ENCODE measurements at regions of chr1 and their contacts with region 1.

Region 1: DNA sequence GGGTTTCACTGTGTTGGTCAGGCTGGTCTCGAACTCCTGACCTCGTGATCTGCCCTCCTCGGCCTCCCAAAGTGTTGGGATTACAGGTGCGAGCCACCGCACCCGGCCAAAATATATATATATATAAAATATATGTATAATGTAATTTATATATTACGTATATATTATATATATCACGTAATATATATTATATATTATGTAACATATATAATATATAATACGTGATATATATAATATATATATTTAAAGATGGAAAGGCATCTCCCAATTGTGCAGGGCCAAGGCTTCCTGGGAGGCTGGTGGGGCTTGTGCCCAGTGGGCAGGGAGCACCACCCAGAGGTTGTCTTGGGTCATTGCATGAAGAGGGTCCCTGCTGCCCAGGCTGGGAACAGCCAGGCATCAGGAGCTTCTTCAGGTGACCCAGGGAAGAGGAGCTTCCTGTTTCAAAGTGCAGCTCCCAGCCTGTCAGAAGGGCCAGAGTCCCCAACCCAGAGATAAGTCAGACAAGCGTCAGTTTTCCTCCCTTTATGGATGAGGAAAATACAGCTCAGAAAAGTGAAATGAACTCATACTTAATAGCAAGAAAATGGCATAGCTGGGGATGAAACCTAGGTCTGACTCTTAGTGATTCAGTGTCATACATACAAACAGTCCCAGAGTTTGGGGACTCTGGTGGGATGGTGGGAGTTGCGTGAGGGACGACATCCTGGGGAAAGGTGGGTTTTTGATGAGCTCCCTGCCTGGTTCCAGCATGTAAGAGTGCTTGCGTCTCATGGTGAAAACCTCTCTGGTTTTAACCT is 12.0 kb downstream of the UBE2Q1 start:
- DNase-seq: peak; percentile 13
- ATAC-seq: peak; percentile 87
- H3K4me3 ChIP-seq: no peak overlapping the region
- H3K27ac ChIP-seq: no peak overlapping the region
- H3K4me1 ChIP-seq: peaks cover 15% of the 10 kb centered on the region
- H3K27me3 ChIP-seq: no peaks in the 10 kb centered on the region; a peak in 1 of 4 replicates
- CTCF ChIP-seq: peak; percentile 72 to 86 (median 84)
- EP300 ChIP-seq: no peak
- POLR2A ChIP-seq: no peak
- RAD21 ChIP-seq: peak; percentile 98

Region 2: DNA sequence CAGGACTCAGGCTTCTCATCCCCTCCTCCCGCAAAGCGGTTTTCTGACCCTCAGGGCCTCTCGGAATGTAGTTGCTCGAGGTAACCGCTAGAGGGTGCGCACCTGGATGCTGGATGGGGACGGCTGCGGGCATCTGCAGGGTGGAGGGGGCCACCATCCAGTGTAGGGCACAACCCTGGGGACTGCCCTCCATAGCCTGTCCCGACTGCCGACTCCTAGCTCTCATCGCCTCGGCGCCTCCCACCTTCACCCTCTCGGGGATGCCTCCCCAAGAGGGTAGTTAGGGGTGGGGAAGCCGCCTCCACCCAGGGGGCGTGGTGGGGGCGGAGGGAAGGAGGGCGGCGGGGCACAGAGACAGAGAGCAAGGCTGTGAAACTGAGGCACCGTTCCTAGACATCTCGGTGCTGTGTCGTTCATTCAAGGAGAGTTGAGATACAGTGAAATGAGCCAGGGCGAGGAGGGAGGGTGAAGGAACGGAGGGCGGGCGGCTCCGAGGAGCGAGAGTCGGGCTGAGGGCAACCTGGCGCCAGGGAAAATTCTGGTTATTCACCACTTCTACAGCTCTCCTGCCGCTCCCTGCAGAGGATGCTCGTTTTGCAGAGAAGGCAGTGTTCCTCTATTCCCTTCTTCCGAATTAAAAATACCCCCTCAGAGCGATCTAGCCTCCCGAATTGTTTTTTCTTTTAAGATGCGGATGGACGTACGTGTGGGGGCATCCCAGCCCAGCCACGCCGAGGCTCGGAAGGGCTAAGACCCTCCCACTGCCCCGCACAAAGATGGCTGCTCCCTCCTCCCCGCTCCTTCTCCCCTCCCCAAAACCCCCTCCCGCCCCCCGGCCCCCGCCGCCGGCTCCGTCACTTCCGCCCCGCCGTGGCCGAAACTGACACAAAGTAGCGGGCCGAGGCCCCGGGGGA is 221.5 kb before region 1 on chr1 and contains the start of gene ATP8B2:
- CTCF ChIA-PET with region 1: interaction called, 14 read pairs
- POLR2A ChIA-PET with region 1: no interaction called
- RAD21 ChIA-PET with region 1: interaction called, 3 read pairs
- SMC1A ChIA-PET with region 1: interaction called, 5 read pairs
- in situ Hi-C with region 1: no loop called
- intact Hi-C with region 1: no loop called
- DNase-seq: no peak
- ATAC-seq: peak; percentile 74
- H3K4me3 ChIP-seq: peak within 1 kb of the TSS; percentile 91
- H3K27ac ChIP-seq: peak within 1 kb of the TSS; percentile 42
- H3K4me1 ChIP-seq: peaks cover 23% of the 10 kb centered on the region
- H3K27me3 ChIP-seq: no peaks in the 10 kb centered on the region
- CTCF ChIP-seq: peak; percentile 92 to 94 (median 92)
- EP300 ChIP-seq: no peak
- POLR2A ChIP-seq: no peak; the same call in 1 of the 2 replicates
- RAD21 ChIP-seq: peak; percentile 54
- polyA plus RNA-seq, gene ATP8B2: 0.44 to 0.82 TPM

Region 3: DNA sequence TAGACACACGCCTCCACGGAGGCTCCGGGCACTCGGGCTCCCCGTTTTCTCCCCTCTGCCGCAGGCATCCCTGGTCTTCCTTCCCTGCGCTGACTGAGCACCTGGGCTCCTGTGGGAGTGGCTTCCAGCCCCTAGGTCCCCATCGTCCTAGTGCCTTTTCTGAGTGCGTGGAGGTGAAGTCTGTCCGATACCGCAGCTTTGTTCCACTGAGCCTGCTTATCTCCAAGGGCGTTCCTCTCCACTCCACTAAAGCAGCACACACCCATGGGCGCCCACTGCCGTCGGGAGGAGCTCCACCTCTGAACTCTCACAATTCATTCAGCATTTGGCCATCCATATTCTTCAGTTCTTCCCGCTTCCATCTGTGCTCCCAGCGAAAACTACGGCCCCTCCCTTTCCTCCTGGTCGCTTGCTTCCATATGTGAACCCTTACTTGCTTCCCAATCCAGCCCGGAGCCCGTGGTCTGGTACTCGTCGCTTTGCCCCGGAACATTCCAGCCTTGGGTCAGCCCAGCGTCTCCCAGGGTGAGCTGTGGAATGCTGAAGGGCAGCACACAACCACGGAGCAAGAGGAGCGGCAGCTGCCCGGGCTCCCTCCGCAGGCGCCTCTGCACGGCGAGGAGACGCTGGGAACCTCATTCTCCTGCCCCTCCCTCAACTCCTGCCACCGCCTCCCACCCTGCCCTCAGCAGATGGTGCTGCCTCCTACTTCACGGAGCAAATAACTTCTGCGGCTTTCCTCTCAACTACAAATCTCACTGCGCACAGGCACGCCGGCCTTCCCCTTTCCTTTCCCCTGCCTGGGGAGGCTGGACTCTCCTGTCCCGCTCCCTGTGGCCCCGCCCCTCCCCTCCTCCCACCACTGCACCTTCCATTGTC is 193.6 kb before region 1 on chr1:
- CTCF ChIA-PET with region 1: interaction called, 5 read pairs
- POLR2A ChIA-PET with region 1: interaction called, 4 read pairs
- RAD21 ChIA-PET with region 1: interaction called, 18 read pairs
- SMC1A ChIA-PET with region 1: interaction called, 3 read pairs
- in situ Hi-C with region 1: no loop called
- intact Hi-C with region 1: no loop called
- DNase-seq: no peak
- ATAC-seq: peak; percentile 77
- H3K4me3 ChIP-seq: peak overlapping the region; percentile 18; the same call in 1 of the 2 replicates
- H3K27ac ChIP-seq: no peak overlapping the region
- H3K4me1 ChIP-seq: peaks cover 10% of the 10 kb centered on the region
- H3K27me3 ChIP-seq: peaks cover 0 to 5% of the 10 kb centered on the region in 2 experiments; a peak in 2 of 4 replicates
- CTCF ChIP-seq: peak in 1 of 3 experiments; percentile 48; a peak in 2 of 6 replicates
- EP300 ChIP-seq: no peak
- POLR2A ChIP-seq: no peak
- RAD21 ChIP-seq: peak; percentile 22; the same call in 1 of the 2 replicates

Region 4: GRCh38 chr1:154493276-154493675 is 53.2 kb before region 1 on chr1:
- CTCF ChIA-PET with region 1: interaction called, 302 read pairs
- POLR2A ChIA-PET with region 1: no interaction called
- RAD21 ChIA-PET with region 1: interaction called, 11 read pairs
- SMC1A ChIA-PET with region 1: interaction called, 5 read pairs
- in situ Hi-C with region 1: loop called (anchors 5 kb)
- intact Hi-C with region 1: no loop called
- DNase-seq: no peak
- ATAC-seq: peak; percentile 47
- H3K4me3 ChIP-seq: no peak overlapping the region
- H3K27ac ChIP-seq: no peak overlapping the region; the same call in 1 of the 2 replicates
- H3K4me1 ChIP-seq: peaks cover 45% of the 10 kb centered on the region
- H3K27me3 ChIP-seq: no peaks in the 10 kb centered on the region
- CTCF ChIP-seq: no peak
- EP300 ChIP-seq: no peak
- POLR2A ChIP-seq: no peak
- RAD21 ChIP-seq: no peak

Region 5: DNA sequence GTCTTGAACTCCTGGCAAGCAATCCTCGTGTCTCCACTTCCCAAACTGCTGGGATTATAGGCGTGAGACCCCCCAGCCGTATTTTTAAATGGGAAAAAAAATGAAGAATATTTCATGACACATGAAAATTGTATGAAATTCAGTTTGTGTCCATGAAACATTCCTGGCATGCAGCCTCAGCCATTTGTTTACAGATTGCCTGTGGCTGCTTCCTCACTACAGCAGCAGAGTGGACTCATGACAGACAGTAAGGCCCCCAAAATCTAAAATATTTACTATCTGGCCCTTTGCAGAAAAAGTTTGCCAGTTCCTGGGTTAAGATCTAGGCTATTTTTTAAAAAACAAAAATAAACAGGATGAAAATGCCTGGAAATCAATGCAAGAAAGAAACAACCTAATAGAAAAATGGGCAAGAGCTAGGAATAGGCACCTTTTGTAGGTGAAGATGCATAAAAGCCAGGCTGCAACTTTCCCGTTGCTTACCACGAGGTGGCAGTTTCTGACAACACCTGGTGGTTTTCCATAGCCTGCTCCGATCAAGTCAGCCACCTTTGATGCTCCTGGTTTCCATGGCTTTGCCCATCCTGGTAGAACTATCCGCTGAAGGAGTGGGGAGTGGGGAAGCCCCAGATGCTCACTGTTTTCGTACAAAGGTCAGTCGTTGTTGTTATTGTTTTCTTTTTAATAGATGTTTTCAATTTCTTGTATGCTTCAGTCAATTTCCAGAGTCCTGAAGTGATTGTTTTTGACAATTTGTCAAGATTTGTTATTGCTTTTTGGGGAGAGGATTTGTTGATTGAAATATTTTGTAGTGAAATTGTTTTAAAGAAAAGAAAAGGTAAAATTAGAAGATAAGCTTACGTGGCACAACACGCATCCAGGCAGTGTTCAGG is 12.3 kb before region 1 on chr1:
- CTCF ChIA-PET with region 1: interaction called, 26 read pairs
- POLR2A ChIA-PET with region 1: interaction called, 4 read pairs
- RAD21 ChIA-PET with region 1: no interaction called
- SMC1A ChIA-PET with region 1: interaction called, 15 read pairs
- in situ Hi-C with region 1: no loop called
- intact Hi-C with region 1: no loop called
- DNase-seq: no peak
- ATAC-seq: 0 out of 3 replicates have a peak, but pooled peaks have one; percentile 31
- H3K4me3 ChIP-seq: no peak overlapping the region
- H3K27ac ChIP-seq: no peak overlapping the region
- H3K4me1 ChIP-seq: no peaks in the 10 kb centered on the region
- H3K27me3 ChIP-seq: peaks cover 0 to 1% of the 10 kb centered on the region in 2 experiments; a peak in 2 of 4 replicates
- CTCF ChIP-seq: peak; percentile 45 to 62 (median 45); a peak in 5 of 6 replicates
- EP300 ChIP-seq: no peak
- POLR2A ChIP-seq: no peak
- RAD21 ChIP-seq: peak; percentile 28

Region 6: DNA sequence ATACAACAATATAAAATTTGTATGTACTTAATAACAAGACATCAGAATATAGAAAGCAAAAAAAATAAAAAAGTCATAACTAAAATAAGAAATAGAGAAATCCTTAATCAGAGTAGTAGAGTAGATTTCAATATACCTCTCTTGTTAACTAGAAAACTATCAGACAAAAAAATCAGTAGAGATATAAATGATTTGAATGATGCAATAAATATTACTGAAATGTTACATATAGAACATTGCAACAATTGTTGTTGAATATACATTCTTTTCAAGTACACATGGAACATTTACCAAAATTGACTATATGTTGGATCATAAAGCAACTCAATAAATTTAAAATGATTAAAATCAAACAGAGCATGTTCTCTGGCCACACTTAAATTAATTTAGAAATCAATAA is 93.4 kb after region 1 on chr1:
- CTCF ChIA-PET with region 1: no interaction called
- POLR2A ChIA-PET with region 1: no interaction called
- RAD21 ChIA-PET with region 1: no interaction called
- SMC1A ChIA-PET with region 1: no interaction called
- in situ Hi-C with region 1: no loop called
- intact Hi-C with region 1: no loop called
- DNase-seq: no peak
- ATAC-seq: no peak
- H3K4me3 ChIP-seq: no peak overlapping the region
- H3K27ac ChIP-seq: no peak overlapping the region
- H3K4me1 ChIP-seq: no peaks in the 10 kb centered on the region
- H3K27me3 ChIP-seq: no peaks in the 10 kb centered on the region
- CTCF ChIP-seq: no peak
- EP300 ChIP-seq: no peak
- POLR2A ChIP-seq: no peak
- RAD21 ChIP-seq: no peak

Region 7: GRCh38 chr1:155513300-155513916 is 966.9 kb after region 1 on chr1:
- CTCF ChIA-PET with region 1: no interaction called
- POLR2A ChIA-PET with region 1: no interaction called
- RAD21 ChIA-PET with region 1: no interaction called
- SMC1A ChIA-PET with region 1: no interaction called
- in situ Hi-C with region 1: no loop called
- intact Hi-C with region 1: no loop called
- DNase-seq: no peak
- ATAC-seq: no peak
- H3K4me3 ChIP-seq: no peak overlapping the region
- H3K27ac ChIP-seq: no peak overlapping the region
- H3K4me1 ChIP-seq: no peaks in the 10 kb centered on the region
- H3K27me3 ChIP-seq: no peaks in the 10 kb centered on the region
- CTCF ChIP-seq: no peak
- EP300 ChIP-seq: no peak
- POLR2A ChIP-seq: no peak
- RAD21 ChIP-seq: no peak

Measured in GM12878 (cell line).